Prostate gland (tissue), 2 donors: ENCODE measurements at regions of chr15 and their contacts with region 1.

Region 1: GRCh38 chr15:61051569-61052031 is 177.5 kb downstream of the RORA start:
- DNase-seq: peak; percentile 24
- H3K4me3 ChIP-seq: no peak overlapping the region
- H3K27ac ChIP-seq: no peak overlapping the region
- H3K4me1 ChIP-seq: no peaks in the 10 kb centered on the region
- H3K27me3 ChIP-seq: no peaks in the 10 kb centered on the region
- CTCF ChIP-seq: peak; percentile 30 to 66 (median 51)
- POLR2A ChIP-seq: no peak

Region 2: GRCh38 chr15:60591496-60592370 is 459.9 kb before region 1 on chr15:
- intact Hi-C with region 1: loop called (anchors 2 kb)
- DNase-seq: peak; percentile 27
- H3K4me3 ChIP-seq: peak overlapping the region; percentile 82 to 94
- H3K27ac ChIP-seq: peak overlapping the region; percentile 96
- H3K4me1 ChIP-seq: no peaks in the 10 kb centered on the region
- H3K27me3 ChIP-seq: no peaks in the 10 kb centered on the region
- CTCF ChIP-seq: peak in 1 of 4 experiments; percentile 23
- POLR2A ChIP-seq: no peak

Region 3: DNA sequence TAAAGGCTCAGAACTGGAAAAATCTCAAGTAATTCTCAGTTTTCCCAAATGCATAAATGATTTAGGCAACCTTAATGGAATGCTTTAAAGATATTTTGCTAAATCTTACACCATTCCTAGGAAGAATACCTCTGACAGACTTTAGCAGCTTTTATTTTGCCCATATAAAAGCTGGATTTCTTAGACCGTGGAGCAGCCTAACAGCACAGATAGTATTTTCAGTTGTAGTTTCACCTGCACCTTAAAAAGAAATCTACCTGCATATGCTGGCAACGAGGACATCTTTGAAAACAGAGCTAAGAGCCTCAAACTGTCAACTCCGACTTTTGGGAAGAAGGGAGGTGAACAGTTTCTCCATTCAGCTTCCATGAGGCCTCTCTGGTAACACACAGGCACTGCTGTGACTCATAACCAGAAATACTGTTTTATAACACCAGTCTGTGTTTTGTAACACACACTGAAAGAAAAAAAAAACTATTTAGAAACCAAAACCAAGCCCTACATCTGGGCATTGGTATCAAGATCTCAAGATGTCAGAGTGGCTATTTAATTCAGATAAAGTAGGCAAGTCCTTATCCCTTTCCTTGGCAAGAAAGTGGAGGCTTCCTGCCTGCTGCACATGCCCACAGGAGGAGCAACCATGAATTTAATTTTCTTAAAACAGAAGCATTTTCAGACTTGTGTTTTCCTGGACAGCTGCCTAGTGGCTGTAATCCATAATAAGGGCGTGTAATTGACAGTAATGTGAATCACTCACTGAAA is 391.1 kb before region 1 on chr15:
- intact Hi-C with region 1: no loop called
- DNase-seq: no peak
- H3K4me3 ChIP-seq: no peak overlapping the region
- H3K27ac ChIP-seq: no peak overlapping the region
- H3K4me1 ChIP-seq: no peaks in the 10 kb centered on the region
- H3K27me3 ChIP-seq: no peaks in the 10 kb centered on the region
- CTCF ChIP-seq: no peak
- POLR2A ChIP-seq: no peak

Region 4: GRCh38 chr15:60982249-60982910 is 69.2 kb before region 1 on chr15:
- intact Hi-C with region 1: no loop called
- DNase-seq: no peak
- H3K4me3 ChIP-seq: no peak overlapping the region
- H3K27ac ChIP-seq: no peak overlapping the region
- H3K4me1 ChIP-seq: no peaks in the 10 kb centered on the region
- H3K27me3 ChIP-seq: no peaks in the 10 kb centered on the region
- CTCF ChIP-seq: no peak
- POLR2A ChIP-seq: no peak

Region 5: GRCh38 chr15:61621146-61621545 is 569.5 kb after region 1 on chr15:
- intact Hi-C with region 1: loop called (anchors 10 kb)
- DNase-seq: peak; percentile 8
- H3K4me3 ChIP-seq: no peak overlapping the region
- H3K27ac ChIP-seq: no peak overlapping the region
- H3K4me1 ChIP-seq: no peaks in the 10 kb centered on the region
- H3K27me3 ChIP-seq: no peaks in the 10 kb centered on the region
- CTCF ChIP-seq: peak in 3 of 4 experiments; percentile 47 to 61 (median 48)
- POLR2A ChIP-seq: no peak